AG04449 (cell line): ENCODE measurements at regions of chr1 and their contacts with region 1.

Region 1: GRCh38 chr1:40404670-40405462 is 31.3 kb downstream of the SMAP2 start:
- DNase-seq: no peak
- H3K4me3 ChIP-seq: no peak overlapping the region
- CTCF ChIP-seq: peak; percentile 36

Region 2: GRCh38 chr1:40315239-40315794 is 89.5 kb before region 1 on chr1:
- CTCF ChIA-PET with region 1: interaction called, 20 read pairs
- POLR2A ChIA-PET with region 1: no interaction called
- DNase-seq: peak; percentile 10
- H3K4me3 ChIP-seq: peak overlapping the region; percentile 36
- CTCF ChIP-seq: peak; percentile 91

Region 3: DNA sequence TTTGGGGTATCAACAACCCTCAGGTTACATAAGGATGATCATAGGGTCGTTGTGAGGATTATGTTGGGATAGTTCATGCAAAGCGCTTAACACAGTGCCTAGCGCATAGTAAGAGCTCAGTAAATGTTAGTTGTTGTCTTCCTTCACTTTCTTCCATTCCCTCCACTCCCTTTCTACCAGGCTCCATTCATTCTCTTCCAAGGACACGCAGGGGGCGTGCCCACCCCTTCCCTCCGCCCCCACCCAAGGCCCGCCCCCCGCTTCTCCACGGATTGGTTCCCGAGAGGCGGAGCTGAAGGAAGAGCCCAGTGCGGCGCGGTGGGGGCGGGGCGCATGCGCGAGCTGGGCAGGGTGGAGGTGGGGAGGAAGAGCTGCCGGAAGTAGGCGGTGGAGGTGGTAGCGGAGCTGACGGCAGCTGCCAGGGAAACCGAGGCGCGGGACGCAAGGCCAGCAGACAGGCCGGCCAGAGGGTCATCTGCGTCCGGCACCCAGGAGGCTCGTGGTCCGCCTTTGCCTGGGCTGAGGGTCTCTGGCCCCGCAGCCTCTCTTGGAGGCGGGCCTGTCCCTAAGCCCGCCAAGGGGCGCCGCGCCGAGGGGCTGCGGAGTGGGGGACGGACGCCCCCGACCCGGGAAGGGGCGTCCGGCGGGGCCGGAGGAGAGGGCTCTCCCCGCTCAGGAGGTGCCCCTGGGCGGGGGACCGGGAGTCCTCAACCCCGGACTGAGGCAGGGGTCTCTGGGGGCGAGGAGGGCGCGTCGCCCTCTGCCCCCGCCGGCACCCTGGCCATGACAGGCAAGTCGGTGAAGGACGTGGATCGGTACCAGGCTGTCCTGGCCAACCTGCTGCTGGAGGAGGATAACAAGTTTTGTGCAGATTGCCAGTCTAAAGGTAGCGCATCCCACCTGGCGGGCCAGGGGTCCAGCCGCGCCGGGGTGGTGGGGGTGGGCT is 31.3 kb before region 1 on chr1 and contains the start of gene SMAP2:
- CTCF ChIA-PET with region 1: interaction called, 17 read pairs
- POLR2A ChIA-PET with region 1: no interaction called
- DNase-seq: no peak
- H3K4me3 ChIP-seq: peak within 1 kb of the TSS; percentile 95
- CTCF ChIP-seq: no peak

Region 4: GRCh38 chr1:40421431-40422384 is 16.8 kb after region 1 on chr1:
- CTCF ChIA-PET with region 1: interaction called, 15 read pairs
- POLR2A ChIA-PET with region 1: no interaction called
- DNase-seq: no peak
- H3K4me3 ChIP-seq: no peak overlapping the region
- CTCF ChIP-seq: no peak

Region 5: GRCh38 chr1:40736085-40736531 is 331.2 kb after region 1 on chr1:
- CTCF ChIA-PET with region 1: no interaction called
- POLR2A ChIA-PET with region 1: no interaction called
- DNase-seq: no peak
- H3K4me3 ChIP-seq: no peak overlapping the region
- CTCF ChIP-seq: no peak